ENCODE measurements at regions of chr19 and their contacts with region 1.

Region 1: DNA sequence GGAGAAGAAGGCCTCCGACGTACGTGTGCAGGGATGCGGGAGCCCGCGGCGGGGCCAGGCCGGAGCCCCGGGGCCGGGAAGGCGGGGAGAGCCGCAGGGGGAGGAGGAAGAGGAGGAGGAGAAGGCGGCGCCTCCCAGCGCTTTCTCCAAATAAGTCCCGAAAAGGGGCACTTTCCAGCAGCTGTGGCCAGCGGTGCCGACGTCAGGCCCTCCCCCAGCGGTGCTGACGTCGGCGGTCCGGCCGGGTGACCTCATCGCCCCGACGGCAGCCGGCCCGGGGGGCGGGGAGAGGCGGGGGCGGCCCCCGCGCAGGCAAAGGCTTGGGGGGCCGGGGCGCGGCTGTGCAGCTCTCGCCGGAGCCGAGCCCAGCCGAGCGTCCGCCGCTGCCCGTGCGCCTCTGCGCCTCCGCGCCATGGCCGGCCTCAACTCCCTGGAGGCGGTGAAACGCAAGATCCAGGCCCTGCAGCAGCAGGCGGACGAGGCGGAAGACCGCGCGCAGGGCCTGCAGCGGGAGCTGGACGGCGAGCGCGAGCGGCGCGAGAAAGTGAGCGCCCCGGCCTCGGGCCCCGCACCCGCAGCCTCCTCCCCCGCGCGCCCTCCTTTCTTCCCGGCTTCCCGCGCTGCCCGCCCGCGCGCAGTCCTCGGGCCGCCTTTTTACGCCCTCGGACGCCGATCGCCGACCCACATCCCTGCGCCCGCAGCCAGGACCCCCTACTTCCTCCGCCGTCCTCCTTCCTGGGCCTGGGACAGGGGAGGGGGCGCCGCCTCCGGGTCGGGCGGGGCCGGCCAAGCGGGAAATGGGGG is at the start of gene TPM4:
- DNase-seq: peak; percentile 88
- ATAC-seq: peak; percentile 71
- H3K4me3 ChIP-seq: peak within 1 kb of the TSS; percentile 84 to 87 (median 84)
- H3K27ac ChIP-seq: peak within 1 kb of the TSS; percentile 90
- H3K4me1 ChIP-seq: peaks cover 86% of the 10 kb centered on the region
- H3K27me3 ChIP-seq: no peaks in the 10 kb centered on the region
- CTCF ChIP-seq: no peak; the same call in 1 of the 2 replicates
- EP300 ChIP-seq: no peak
- POLR2A ChIP-seq: peak; percentile 54 to 75
- RAD21 ChIP-seq: 0 out of 2 replicates have a peak, but pooled peaks have one; percentile 7
- total RNA-seq, gene TPM4: 180 and 226 TPM in 2 replicates

Region 2: DNA sequence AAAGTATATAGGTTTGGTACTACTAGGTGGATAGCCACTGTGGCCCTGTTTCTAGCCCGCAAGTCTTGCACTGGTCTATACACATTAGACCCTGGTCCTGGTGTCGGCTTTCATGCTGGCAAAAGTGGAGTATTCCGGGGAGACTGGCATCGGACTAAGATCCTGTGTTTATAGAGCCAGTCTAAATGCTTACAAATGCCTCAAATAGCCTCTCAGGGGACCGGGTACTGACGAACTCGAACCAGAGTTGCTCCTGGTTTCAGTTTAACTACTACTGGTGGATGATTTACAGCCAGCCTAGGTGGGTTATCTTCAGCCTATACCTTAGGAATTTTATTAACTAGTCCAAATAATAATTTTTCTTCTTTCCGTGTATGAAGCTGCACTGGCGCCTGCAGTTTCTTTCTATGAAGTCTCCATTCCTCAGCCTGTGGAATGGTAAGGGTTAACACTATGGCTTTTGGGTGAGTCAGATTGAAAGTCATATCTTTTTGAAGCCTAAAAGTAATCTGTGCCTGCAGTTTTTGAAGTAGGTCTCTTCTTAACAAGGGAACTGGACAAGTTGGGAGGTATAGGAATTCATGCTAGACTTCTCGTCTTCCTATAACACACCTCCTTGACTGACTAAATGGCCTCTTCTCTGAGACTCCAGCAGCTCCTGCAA is 76.2 kb before region 1 on chr19:
- CTCF ChIA-PET with region 1: no interaction called
- POLR2A ChIA-PET with region 1: no interaction called
- in situ Hi-C with region 1: no loop called
- intact Hi-C with region 1: no loop called
- DNase-seq: no peak
- ATAC-seq: no peak
- H3K4me3 ChIP-seq: no peak overlapping the region
- H3K27ac ChIP-seq: no peak overlapping the region
- H3K4me1 ChIP-seq: peaks cover 16% of the 10 kb centered on the region; the same call in 1 of the 2 replicates
- H3K27me3 ChIP-seq: peaks cover 1 to 3% of the 10 kb centered on the region in 2 experiments; a peak in 2 of 5 replicates
- CTCF ChIP-seq: no peak
- EP300 ChIP-seq: no peak
- POLR2A ChIP-seq: no peak
- RAD21 ChIP-seq: no peak

Region 3: GRCh38 chr19:16051254-16052025 is 24.9 kb before region 1 on chr19:
- CTCF ChIA-PET with region 1: no interaction called
- POLR2A ChIA-PET with region 1: no interaction called
- in situ Hi-C with region 1: no loop called
- intact Hi-C with region 1: no loop called
- DNase-seq: no peak
- ATAC-seq: peak; percentile 53; the same call in 2 of the 3 replicates
- H3K4me3 ChIP-seq: no peak overlapping the region
- H3K27ac ChIP-seq: no peak overlapping the region
- H3K4me1 ChIP-seq: no peaks in the 10 kb centered on the region; the same call in 1 of the 2 replicates
- H3K27me3 ChIP-seq: no peaks in the 10 kb centered on the region; a peak in 1 of 5 replicates
- CTCF ChIP-seq: no peak
- EP300 ChIP-seq: no peak
- POLR2A ChIP-seq: no peak
- RAD21 ChIP-seq: no peak

Region 4: DNA sequence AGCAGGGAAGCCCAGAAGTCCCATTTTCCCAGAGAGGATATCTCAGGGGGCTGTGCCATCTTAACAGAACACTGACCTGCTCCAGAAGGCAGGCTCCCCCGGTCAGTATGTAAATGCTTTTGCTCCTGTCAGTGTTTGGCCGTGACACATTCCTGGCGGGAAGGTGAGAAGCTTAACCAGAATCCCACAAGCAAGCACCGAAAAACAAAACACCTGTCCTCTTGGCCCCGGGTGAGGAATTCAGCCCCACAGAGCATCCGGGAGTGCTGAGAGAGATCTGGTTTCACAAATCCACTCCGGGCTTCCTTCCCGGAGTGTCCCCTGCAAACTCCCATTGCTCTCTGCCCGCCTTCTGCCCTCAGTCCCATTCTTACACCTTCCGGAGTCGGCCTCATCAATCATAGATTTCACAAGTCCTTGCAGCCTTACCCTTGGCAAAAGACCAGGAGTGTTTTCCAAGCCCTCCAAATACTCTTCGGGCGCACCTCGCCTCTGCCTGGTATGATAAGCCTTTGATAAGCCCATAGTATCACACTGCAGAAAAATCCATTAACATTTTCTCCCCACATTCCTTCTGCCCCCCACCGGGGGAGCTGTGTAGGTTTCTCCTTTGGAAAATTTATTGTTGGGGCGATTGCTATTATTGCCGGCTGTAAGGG is 12.1 kb after region 1 on chr19:
- CTCF ChIA-PET with region 1: no interaction called
- POLR2A ChIA-PET with region 1: interaction called, 66 read pairs
- in situ Hi-C with region 1: no loop called
- intact Hi-C with region 1: loop called (anchors 1 kb)
- DNase-seq: no peak
- ATAC-seq: peak; percentile 26
- H3K4me3 ChIP-seq: peak overlapping the region in 1 of 3 experiments; percentile 5; a peak in 1 of 6 replicates
- H3K27ac ChIP-seq: peak overlapping the region; percentile 97
- H3K4me1 ChIP-seq: peaks cover 96% of the 10 kb centered on the region
- H3K27me3 ChIP-seq: no peaks in the 10 kb centered on the region
- CTCF ChIP-seq: no peak
- EP300 ChIP-seq: 0 out of 4 replicates have a peak, but pooled peaks of 1 of the 2 experiments have one; percentile 14
- POLR2A ChIP-seq: no peak
- RAD21 ChIP-seq: no peak

Region 5: DNA sequence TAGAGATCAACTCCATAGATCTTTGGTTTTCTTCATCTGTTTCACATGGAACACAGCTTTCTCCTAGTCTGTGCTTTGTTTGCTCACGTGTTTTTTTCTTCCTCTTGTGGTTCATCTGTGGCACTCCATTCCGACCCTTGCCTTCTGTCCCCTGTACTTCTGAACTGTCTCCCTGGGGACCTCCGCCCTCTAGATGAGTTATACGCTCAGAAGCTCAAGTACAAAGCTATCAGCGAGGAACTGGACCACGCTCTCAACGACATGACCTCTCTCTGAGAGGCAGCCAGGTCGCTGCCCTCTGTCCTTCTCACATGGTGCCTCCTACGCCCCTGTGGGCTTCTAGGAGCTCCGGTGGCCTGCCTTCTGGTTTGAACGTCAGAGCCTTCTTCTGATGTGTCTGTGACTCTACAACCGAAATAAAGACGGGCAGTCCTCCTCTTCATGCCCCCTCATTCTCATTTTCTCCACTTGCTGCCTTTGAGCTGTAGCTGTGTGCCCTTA is 18.8 kb after region 1 on chr19:
- CTCF ChIA-PET with region 1: no interaction called
- POLR2A ChIA-PET with region 1: interaction called, 66 read pairs
- in situ Hi-C with region 1: no loop called
- intact Hi-C with region 1: no loop called
- DNase-seq: no peak
- ATAC-seq: no peak
- H3K4me3 ChIP-seq: no peak overlapping the region
- H3K27ac ChIP-seq: peak overlapping the region; percentile 53
- H3K4me1 ChIP-seq: peaks cover 89% of the 10 kb centered on the region
- H3K27me3 ChIP-seq: no peaks in the 10 kb centered on the region
- CTCF ChIP-seq: no peak
- EP300 ChIP-seq: no peak
- POLR2A ChIP-seq: no peak
- RAD21 ChIP-seq: no peak